Natural killer cell (primary cell): ENCODE measurements at regions of chr1 and their contacts with region 1.

Region 1: DNA sequence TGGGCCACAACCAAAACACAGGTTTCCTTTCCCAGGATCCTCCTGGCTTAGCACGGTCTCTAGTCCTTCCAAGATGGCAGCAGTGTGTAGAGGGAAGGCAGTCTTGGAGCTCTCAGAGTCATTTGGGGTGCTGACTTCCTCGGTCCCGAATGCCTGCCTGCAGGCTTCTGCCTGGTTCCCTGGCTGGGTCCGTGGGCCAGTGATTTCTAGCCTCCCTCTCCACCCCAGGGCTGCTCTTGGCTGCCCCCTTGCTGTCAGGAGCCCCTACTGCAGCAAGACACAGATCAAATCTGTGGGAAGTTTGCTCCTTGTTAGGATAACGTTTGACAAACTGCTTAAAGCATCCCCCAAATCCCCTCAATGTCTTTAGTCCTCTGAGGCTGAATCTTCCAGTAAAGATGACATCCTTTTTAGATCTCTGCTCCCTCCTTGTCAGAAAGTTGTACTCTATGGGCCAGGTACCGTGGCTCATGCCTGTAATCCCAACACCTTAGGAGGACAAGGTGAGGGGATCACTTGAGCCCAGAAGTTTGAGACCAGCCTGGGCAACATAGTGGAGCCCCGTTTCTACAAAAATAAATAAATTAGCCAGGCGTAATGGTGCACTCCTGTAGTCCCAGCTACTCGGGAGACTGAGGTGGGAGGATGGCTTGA is 272.5 kb downstream of the RRAGC start:
- DNase-seq: peak; percentile 33 to 72
- ATAC-seq: peak; percentile 49 to 82 (median 73)
- H3K4me3 ChIP-seq: no peak overlapping the region
- H3K4me3 Mint-ChIP-seq: no peak overlapping the region
- H3K27ac ChIP-seq: no peak overlapping the region
- H3K27ac Mint-ChIP-seq: no peak overlapping the region
- H3K4me1 ChIP-seq: peaks cover 3% of the 10 kb centered on the region
- H3K4me1 Mint-ChIP-seq: peaks cover 0 to 11% of the 10 kb centered on the region in 2 donors
- H3K27me3 ChIP-seq: no peaks in the 10 kb centered on the region
- H3K27me3 Mint-ChIP-seq: peaks cover under 1 to 7% of the 10 kb centered on the region in 2 donors
- CTCF ChIP-seq: peak; percentile 77

Region 2: DNA sequence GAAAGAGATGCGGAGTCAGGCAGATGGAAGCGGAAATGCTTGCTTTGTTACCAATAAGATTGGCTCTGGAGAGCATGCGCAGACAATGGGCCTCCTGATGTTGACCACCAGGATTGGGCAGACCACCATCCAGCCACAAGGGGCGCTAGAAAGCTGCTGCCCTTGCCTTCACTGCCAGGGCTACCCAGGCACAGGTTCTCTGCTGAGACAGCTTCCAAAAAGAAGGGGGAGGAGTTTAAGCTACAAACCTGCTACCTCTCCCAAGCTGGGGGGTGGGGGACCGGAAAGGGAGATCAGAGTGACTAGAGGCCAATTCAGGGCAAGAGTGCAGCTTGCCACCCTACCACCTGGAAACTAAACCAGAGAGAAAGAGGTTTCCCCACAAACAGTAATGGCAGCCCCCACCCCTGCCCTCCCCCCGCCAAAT is 97.3 kb before region 1 on chr1:
- intact Hi-C with region 1: loop called (anchors 2 kb)
- DNase-seq: peak; percentile 18 to 62
- ATAC-seq: peak in 1 of 3 donors; percentile 58
- H3K4me3 ChIP-seq: no peak overlapping the region
- H3K4me3 Mint-ChIP-seq: no peak overlapping the region
- H3K27ac ChIP-seq: no peak overlapping the region
- H3K27ac Mint-ChIP-seq: no peak overlapping the region
- H3K4me1 ChIP-seq: no peaks in the 10 kb centered on the region
- H3K4me1 Mint-ChIP-seq: no peaks in the 10 kb centered on the region
- H3K27me3 ChIP-seq: no peaks in the 10 kb centered on the region
- H3K27me3 Mint-ChIP-seq: peaks cover 19 to 47% of the 10 kb centered on the region in 2 donors
- CTCF ChIP-seq: peak; percentile 49

Region 3: DNA sequence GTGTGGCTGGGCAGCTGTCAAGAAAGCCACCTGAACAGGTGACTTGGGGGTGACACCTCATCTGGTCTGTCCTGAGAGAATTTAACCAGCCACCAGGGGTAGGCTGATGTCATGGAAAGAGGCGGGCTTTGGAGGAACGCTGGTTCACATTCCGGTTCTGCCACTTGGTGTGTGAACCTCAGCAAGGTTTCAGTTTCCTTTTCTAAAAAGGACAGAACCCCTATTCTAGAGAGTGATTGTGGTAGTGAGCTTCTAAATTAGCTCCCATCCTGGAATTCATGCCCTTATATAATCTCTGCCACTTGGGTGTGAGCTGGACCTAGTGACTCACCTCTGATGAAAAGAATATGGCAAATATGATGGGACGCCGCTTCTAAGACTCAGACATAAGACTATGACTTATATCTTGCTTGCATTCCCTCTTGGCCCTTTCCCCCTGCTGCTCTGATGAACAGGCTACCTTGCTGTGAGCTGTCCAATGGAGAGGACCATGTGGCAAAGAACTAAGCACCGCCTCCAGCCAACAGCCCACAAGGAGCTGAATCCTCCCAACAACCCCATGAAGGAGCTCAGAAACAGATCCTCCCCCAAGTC is 59.6 kb before region 1 on chr1:
- intact Hi-C with region 1: loop called (anchors 10 kb)
- DNase-seq: peak; percentile 33 to 61
- ATAC-seq: peak; percentile 69 to 91 (median 82)
- H3K4me3 ChIP-seq: no peak overlapping the region
- H3K4me3 Mint-ChIP-seq: peak overlapping the region; percentile 14
- H3K27ac ChIP-seq: no peak overlapping the region
- H3K27ac Mint-ChIP-seq: peak overlapping the region; percentile 25 to 74
- H3K4me1 ChIP-seq: peaks cover 10% of the 10 kb centered on the region
- H3K4me1 Mint-ChIP-seq: peaks cover 12 to 13% of the 10 kb centered on the region in 2 donors
- H3K27me3 ChIP-seq: no peaks in the 10 kb centered on the region
- H3K27me3 Mint-ChIP-seq: peaks cover 11 to 13% of the 10 kb centered on the region in 2 donors
- CTCF ChIP-seq: no peak

Region 4: GRCh38 chr1:38624336-38625039 is 37.4 kb after region 1 on chr1:
- intact Hi-C with region 1: no loop called
- DNase-seq: no peak
- ATAC-seq: no peak
- H3K4me3 ChIP-seq: no peak overlapping the region
- H3K4me3 Mint-ChIP-seq: no peak overlapping the region
- H3K27ac ChIP-seq: no peak overlapping the region
- H3K27ac Mint-ChIP-seq: no peak overlapping the region
- H3K4me1 ChIP-seq: no peaks in the 10 kb centered on the region
- H3K4me1 Mint-ChIP-seq: no peaks in the 10 kb centered on the region
- H3K27me3 ChIP-seq: no peaks in the 10 kb centered on the region
- H3K27me3 Mint-ChIP-seq: peaks cover 9 to 12% of the 10 kb centered on the region in 2 donors
- CTCF ChIP-seq: no peak